ENCODE measurements at regions of chr2 and their contacts with region 1.

Region 1: GRCh38 chr2:38377050-38377828 is at the start of gene ATL2:
- DNase-seq: peak; percentile 82 to 98
- H3K4me3 ChIP-seq: peak within 1 kb of the TSS; percentile 77 to 86
- H3K27ac ChIP-seq: peak within 1 kb of the TSS; percentile 94 to 97
- H3K4me1 ChIP-seq: peaks cover 0 to 24% of the 10 kb centered on the region in 2 donors
- H3K27me3 ChIP-seq: no peaks in the 10 kb centered on the region
- CTCF ChIP-seq: no peak
- total RNA-seq, gene ATL2: 49.1 TPM

Region 2: DNA sequence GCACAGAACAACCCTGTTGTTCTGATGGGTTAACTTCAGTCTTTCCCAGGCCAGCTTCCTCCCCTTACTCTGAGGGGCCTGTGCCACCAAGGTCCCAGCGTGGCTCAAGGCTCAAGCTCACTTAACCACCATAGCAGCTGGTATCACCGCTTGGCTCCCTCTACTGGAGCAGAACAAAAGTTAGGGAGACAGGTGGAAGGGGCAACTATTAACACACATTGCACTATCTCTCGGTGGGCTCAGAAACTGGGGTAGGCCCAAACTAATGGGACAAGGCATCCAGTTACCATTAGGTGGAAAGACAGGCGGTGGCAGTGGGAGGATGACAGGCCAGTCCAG is 88.5 kb after region 1 on chr2:
- intact Hi-C with region 1: loop called (anchors 5 kb)
- DNase-seq: no peak
- H3K4me3 ChIP-seq: no peak overlapping the region
- H3K27ac ChIP-seq: peak overlapping the region; percentile 20 to 28
- H3K4me1 ChIP-seq: peaks cover 0 to 6% of the 10 kb centered on the region in 2 donors
- H3K27me3 ChIP-seq: no peaks in the 10 kb centered on the region
- CTCF ChIP-seq: no peak

Region 3: GRCh38 chr2:38477006-38477405 is 99.8 kb after region 1 on chr2:
- intact Hi-C with region 1: no loop called
- DNase-seq: no peak
- H3K4me3 ChIP-seq: no peak overlapping the region
- H3K27ac ChIP-seq: no peak overlapping the region
- H3K4me1 ChIP-seq: peaks cover 0 to 10% of the 10 kb centered on the region in 2 donors
- H3K27me3 ChIP-seq: no peaks in the 10 kb centered on the region
- CTCF ChIP-seq: no peak

Region 4: GRCh38 chr2:38528008-38528442 is 150.8 kb after region 1 on chr2:
- intact Hi-C with region 1: loop called (anchors 2 kb)
- DNase-seq: peak in 1 of 2 donors; percentile 73
- H3K4me3 ChIP-seq: peak overlapping the region; percentile 69 to 70
- H3K27ac ChIP-seq: peak overlapping the region; percentile 70 to 74
- H3K4me1 ChIP-seq: peaks cover 0 to 28% of the 10 kb centered on the region in 2 donors
- H3K27me3 ChIP-seq: no peaks in the 10 kb centered on the region
- CTCF ChIP-seq: no peak

Region 5: GRCh38 chr2:38602732-38603401 is 225.6 kb after region 1 on chr2 and contains the start of gene HNRNPLL:
- intact Hi-C with region 1: loop called (anchors 2 kb)
- DNase-seq: peak; percentile 91 to 98
- H3K4me3 ChIP-seq: peak within 1 kb of the TSS; percentile 90 to 91
- H3K27ac ChIP-seq: peak within 1 kb of the TSS; percentile 96 to 99
- H3K4me1 ChIP-seq: peaks cover 4 to 29% of the 10 kb centered on the region in 2 donors
- H3K27me3 ChIP-seq: no peaks in the 10 kb centered on the region
- CTCF ChIP-seq: no peak
- total RNA-seq, gene HNRNPLL: 10.6 TPM

Measured in ascending aorta (tissue), 2 donors.